ENCODE measurements at regions of chr4 and their contacts with region 1.

Region 1: GRCh38 chr4:70788733-70789132 is 51.0 kb downstream of the GRSF1 start:
- DNase-seq: no peak
- ATAC-seq: no peak
- H3K4me3 ChIP-seq: no peak overlapping the region
- H3K27ac ChIP-seq: no peak overlapping the region
- H3K4me1 ChIP-seq: no peaks in the 10 kb centered on the region; the same call in 1 of the 2 replicates
- H3K27me3 ChIP-seq: no peaks in the 10 kb centered on the region
- CTCF ChIP-seq: no peak
- POLR2A ChIP-seq: no peak
- RAD21 ChIP-seq: no peak

Region 2: DNA sequence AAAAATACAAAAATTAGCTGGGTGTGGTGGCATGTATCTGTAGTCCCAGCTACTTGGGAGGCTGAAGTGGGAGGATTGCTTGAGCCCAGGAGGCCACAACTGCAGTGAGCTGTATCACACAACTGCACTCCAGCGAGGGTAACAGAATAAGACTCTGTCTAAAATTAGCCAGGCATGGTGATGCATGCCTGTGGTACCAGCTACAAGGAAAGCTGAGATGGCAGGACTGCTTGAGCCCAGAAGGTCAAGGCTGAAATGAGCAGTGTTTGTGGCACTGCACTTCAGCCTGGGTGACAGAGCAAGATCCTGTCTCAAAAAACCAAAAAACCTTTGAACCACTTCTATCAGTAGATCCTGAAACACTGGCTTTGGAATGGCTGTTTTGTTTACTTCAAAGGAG is 40.8 kb after region 1 on chr4:
- CTCF ChIA-PET with region 1: no interaction called
- POLR2A ChIA-PET with region 1: no interaction called
- dilution Hi-C with region 1: no loop called
- in situ Hi-C with region 1: no loop called
- intact Hi-C with region 1: loop called (anchors 5 kb)
- DNase-seq: no peak
- ATAC-seq: no peak
- H3K4me3 ChIP-seq: no peak overlapping the region
- H3K27ac ChIP-seq: no peak overlapping the region
- H3K4me1 ChIP-seq: peaks cover 3% of the 10 kb centered on the region; the same call in 1 of the 2 replicates
- H3K27me3 ChIP-seq: no peaks in the 10 kb centered on the region
- CTCF ChIP-seq: no peak
- POLR2A ChIP-seq: no peak
- RAD21 ChIP-seq: no peak